Left ventricle myocardium inferior (tissue), 1 donor: ENCODE measurements at regions of chr4 and their contacts with region 1.

Region 1: DNA sequence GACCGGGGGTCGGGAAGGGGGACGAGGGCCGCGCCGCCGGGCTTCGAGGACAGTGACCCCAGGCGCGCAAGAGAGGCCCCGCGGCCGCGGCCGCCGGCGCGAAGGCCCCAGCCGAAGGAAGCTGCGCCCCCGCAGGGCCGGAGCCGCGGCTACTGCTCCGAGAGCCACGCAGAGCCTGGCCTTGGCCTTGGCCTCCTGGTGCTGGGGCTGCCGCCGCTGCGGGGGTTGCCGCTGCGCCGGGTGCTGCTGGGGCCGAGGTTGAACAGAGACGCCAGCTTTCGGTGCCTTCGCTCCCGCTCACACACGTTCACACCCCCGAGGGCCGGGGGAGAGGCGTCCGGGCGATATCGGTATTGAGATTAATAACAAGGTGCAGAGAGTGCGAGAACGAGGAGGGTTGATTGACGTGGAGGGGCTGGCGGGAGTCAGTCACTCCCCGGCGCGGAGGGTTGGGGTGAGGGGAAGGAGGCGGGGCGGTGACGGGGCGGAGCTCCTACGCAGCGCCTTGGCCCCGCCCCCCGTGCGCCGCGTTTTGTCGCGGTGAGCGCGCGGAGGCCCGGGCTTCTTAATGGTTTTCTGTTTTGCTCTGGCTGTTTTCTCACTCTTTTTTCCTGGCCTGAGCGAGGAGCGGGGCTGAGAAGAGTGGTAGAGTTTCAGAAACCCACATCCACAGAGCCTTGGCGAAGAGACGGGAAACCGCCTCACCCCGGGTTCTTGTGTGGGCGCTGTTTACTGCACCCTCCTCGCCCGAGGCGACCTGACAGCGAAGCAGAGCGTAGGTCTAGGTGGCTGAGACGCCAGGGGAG is 878 bp upstream of the CNOT6L start:
- DNase-seq: peak; percentile 94
- H3K4me3 ChIP-seq: peak overlapping the region; percentile 79
- H3K27ac ChIP-seq: peak overlapping the region; percentile 96
- H3K4me1 ChIP-seq: peaks cover 62% of the 10 kb centered on the region
- H3K27me3 ChIP-seq: no peaks in the 10 kb centered on the region
- CTCF ChIP-seq: peak; percentile 19

Region 2: DNA sequence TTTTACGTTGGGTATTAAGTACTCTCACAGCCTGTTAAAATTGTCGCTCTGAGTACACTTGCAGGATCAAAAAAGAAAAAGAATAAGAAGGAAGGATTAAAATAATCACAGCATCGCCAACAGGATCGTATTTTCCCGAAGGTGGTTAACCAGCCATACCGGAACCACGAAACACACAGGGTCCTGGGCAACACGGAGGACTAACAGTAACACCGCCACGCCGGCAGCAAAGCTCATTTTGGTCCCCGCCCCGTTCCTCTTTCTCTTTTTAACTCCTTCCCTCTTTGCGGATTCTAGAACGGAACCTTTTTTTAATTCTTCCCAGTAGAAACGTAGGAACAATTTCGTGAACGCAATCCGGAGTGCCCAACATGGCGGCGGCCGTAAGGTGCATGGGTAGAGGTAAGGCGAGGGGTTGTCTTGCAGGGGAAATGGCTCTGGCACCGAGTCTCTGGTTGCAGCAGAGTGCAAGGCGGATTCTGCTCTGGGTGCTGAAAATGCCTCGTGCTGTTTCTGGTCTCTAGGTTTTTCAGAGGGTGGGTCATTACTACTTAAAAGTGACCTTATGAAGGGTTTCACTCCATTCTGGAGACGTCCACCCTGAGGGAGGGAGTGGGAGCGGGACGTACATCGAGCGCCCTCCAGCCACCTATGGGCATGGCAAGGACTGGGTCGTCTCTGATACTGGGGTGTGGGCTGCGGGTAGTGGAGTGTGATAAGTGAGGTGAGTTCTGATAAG is 42.6 kb after region 1 on chr4 and contains the start of gene MRPL1:
- intact Hi-C with region 1: loop called (anchors 5 kb)
- DNase-seq: peak; percentile 88
- H3K4me3 ChIP-seq: peak within 1 kb of the TSS; percentile 84
- H3K27ac ChIP-seq: peak within 1 kb of the TSS; percentile 93
- H3K4me1 ChIP-seq: peaks cover 23% of the 10 kb centered on the region
- H3K27me3 ChIP-seq: no peaks in the 10 kb centered on the region
- CTCF ChIP-seq: no peak
- total RNA-seq, gene MRPL1: 50.8 TPM

Region 3: DNA sequence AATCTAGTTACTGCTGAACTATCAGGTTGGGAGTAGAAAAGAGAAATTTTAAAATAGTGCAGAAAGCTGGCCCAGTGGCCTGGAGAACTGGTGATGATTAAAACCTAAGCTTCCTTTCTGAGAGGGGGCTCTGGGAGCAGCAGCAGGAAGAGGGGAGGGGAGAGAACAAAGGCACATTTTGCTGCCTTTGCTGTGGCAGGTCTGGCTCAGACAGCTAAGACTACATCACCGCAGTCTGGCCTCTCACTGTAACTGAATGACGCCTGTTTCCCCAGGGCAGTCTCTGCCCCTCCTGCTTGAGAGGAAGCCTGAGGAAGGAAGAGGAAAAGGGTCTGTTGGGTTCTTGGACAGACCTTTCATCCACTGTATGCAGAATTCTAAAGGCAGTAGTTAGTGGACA is 385.5 kb after region 1 on chr4:
- intact Hi-C with region 1: no loop called
- DNase-seq: no peak
- H3K4me3 ChIP-seq: no peak overlapping the region
- H3K27ac ChIP-seq: no peak overlapping the region
- H3K4me1 ChIP-seq: no peaks in the 10 kb centered on the region
- H3K27me3 ChIP-seq: no peaks in the 10 kb centered on the region
- CTCF ChIP-seq: no peak